Endothelial cell of umbilical vein (primary cell): ENCODE measurements at regions of chr18 and their contacts with region 1.

Region 1: DNA sequence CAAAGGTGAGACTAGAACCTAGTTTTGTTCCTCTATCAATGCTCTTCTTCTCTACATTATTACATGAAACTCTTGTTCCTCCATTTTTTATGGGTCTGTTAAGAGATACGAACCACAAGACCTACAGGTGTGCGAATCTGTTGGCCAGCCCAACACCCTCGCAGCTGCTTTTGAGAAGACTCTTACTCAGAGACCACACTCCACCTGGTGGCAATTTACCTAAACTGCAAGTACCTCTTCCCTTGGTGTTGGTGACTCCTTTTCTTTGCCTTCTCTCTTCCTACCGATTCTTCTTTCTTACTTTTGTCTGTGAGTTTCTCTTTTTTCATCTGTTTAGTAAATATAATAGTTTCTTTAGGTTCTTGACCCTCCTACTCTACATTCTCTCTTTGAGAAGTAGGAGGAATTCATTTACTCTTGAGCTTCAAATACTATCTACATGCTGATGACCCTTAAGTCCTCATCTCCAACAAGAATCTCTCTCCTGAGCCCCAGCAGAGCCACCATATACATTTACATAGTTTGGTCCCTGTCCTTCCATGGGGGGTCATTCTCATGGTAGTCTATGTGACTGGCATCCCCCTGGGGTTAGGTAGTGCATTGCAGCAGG is 81.8 kb upstream of the GAREM1 start:
- DNase-seq: peak; percentile 62
- H3K4me3 ChIP-seq: no peak overlapping the region
- H3K27ac ChIP-seq: no peak overlapping the region
- H3K4me1 ChIP-seq: no peaks in the 10 kb centered on the region
- H3K27me3 ChIP-seq: peaks cover 2 to 5% of the 10 kb centered on the region in 2 experiments
- CTCF ChIP-seq: peak; percentile 53 to 77
- POLR2A ChIP-seq: no peak

Region 2: DNA sequence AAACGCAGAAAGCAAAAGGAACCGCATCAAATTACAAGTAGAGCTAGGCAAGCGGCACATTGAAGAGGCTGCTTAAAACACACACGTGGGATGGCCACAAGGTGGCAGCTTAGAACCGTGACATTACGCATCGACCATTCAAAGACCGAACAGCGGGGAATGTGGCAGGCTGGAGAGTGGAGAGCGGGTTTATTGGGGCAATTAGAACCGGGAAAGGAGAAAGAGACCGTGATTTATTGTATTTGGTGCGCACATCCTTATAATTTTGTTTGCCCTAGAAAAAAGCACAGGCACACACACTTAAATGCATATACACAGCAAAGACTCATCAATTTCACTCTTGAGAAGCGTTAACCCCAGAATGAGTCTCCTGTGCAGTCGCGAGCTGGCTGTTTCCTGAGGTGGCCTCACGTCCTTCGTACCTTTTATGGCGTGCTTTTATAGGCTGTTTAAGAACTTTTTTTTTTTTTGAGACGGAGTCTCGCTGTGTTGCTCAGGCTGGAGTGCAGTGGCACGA is 394.4 kb before region 1 on chr18:
- CTCF ChIA-PET with region 1: interaction called, 304 read pairs
- POLR2A ChIA-PET with region 1: no interaction called
- dilution Hi-C with region 1: no loop called
- intact Hi-C with region 1: loop called (anchors 1 kb)
- DNase-seq: peak; percentile 83
- H3K4me3 ChIP-seq: no peak overlapping the region
- H3K27ac ChIP-seq: no peak overlapping the region
- H3K4me1 ChIP-seq: no peaks in the 10 kb centered on the region
- H3K27me3 ChIP-seq: peaks cover 0 to 4% of the 10 kb centered on the region in 2 experiments
- CTCF ChIP-seq: peak; percentile 78 to 85
- POLR2A ChIP-seq: no peak

Region 3: DNA sequence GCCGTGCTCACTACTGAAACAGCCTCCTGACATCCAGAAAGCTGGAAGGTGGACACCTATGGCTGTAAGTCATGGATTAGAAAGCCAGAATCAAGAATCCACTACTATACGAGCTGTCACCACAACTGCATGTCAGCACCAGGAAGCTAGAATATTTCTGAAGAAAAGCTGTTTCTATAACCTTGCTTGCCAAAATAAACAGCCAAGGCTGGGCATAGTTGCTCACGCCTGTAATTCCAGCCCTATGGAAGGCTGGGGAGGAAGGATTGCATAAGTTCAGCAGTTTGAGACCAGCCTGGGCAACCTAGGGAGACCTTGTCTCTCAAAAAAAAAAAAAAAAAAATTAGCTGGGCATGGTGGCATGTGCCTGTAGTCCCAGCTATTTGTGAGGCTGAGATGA is 14.4 kb after region 1 on chr18:
- CTCF ChIA-PET with region 1: interaction called, 17 read pairs
- POLR2A ChIA-PET with region 1: no interaction called
- dilution Hi-C with region 1: no loop called
- intact Hi-C with region 1: no loop called
- DNase-seq: no peak
- H3K4me3 ChIP-seq: no peak overlapping the region
- H3K27ac ChIP-seq: no peak overlapping the region
- H3K4me1 ChIP-seq: no peaks in the 10 kb centered on the region
- H3K27me3 ChIP-seq: no peaks in the 10 kb centered on the region
- CTCF ChIP-seq: no peak
- POLR2A ChIP-seq: no peak